Mammary epithelial cell (primary cell): ENCODE measurements at regions of chr17 and their contacts with region 1.

Region 1: DNA sequence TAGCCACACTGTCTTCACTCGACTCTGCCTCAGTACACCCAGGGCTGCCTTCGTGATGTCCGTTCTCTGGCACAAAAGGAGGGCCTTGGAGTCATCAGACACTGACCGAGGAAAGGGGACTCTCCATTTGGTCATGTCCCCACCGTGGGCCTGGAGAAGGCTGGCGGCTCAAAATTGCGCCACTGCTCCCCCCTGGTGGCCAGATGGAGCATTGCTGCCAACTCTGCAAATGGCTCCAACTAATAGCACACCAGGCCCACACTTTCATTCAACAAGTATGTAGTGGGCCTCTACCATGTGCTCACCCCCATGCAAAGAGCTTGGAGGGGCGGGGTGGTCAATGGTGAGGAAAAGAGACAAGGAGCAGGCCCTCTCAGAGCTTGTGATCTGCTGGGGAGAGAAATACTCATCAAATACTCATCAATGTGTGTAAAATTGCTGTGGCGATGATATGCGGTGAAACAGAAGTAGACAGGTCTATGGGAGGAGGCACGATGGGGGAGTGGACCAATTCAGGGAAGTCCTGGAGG is 5.2 kb upstream of the GRIN2C start:
- DNase-seq: peak; percentile 41
- H3K4me3 ChIP-seq: no peak overlapping the region
- H3K27ac ChIP-seq: no peak overlapping the region
- H3K4me1 ChIP-seq: peaks cover 5% of the 10 kb centered on the region
- H3K27me3 ChIP-seq: peaks cover 18% of the 10 kb centered on the region
- CTCF ChIP-seq: peak; percentile 96

Region 2: DNA sequence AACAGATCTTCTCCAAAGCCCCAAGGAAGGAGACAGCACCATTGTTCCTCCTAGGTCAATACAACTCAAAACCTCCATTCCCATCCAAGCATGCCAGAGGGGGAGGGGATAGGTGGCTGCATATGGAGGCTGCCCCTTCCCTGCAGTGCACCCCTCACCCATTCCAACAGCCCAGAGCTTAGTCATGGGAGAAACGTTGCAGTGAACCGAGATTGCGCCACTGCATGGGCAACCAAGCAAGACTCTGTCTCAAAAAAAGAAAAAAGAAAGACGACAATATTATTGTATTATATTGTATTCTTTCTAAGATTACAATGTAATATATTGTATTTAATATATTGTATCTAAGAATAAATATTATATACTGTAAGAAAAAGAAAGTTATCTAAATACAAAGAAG is 205.0 kb before region 1 on chr17:
- CTCF ChIA-PET with region 1: no interaction called
- dilution Hi-C with region 1: no loop called
- in situ Hi-C with region 1: no loop called
- intact Hi-C with region 1: loop called (anchors 5 kb)
- DNase-seq: no peak
- H3K4me3 ChIP-seq: no peak overlapping the region
- H3K27ac ChIP-seq: no peak overlapping the region
- H3K4me1 ChIP-seq: no peaks in the 10 kb centered on the region
- H3K27me3 ChIP-seq: no peaks in the 10 kb centered on the region
- CTCF ChIP-seq: no peak

Region 3: DNA sequence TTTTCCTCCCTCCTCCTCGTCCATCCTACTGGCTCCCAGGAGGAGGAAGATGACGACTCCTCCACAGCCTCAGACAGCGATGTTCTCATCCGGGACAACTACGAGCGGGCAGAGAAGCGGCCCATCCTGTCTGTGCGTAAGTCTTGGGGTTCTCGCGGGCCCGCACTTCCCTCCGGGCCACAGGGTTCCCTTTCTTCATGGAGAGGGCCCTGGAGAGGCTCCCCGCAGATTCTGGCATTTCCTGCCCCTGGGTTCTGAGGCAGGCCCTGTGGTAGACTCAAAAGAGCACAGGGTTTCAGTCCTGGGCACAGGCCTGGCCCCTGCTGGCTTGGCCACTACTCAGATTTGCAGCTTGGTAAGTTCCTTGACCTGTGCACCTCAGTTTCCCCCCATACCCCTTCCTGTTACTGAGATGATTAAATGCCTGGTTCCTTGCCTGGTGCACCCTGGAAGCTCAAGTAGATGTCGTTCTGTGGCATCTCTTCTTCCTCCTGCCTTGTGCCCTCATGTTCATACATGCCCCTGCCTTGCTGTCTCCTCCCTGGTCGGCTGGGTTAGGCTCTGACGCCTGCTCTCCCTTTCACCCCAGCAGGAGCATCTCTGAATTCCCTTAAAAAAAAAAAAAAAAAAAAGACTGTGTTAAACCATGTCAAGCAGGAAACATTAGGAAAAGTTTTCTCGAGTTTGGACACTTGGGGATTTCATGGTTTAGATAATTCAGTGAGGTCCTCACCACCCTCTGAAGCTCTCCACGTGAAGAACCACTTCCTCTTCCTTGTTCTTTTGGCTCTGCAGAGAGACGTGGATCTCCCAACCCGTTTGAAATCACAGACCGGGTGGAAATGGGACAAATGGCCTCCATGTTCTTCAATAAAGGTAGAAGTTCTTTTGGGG is 74.5 kb before region 1 on chr17:
- CTCF ChIA-PET with region 1: no interaction called
- dilution Hi-C with region 1: loop called (anchors 5 kb)
- in situ Hi-C with region 1: loop called (anchors 10 kb)
- intact Hi-C with region 1: loop called (anchors 1 kb)
- DNase-seq: no peak
- H3K4me3 ChIP-seq: no peak overlapping the region
- H3K27ac ChIP-seq: no peak overlapping the region
- H3K4me1 ChIP-seq: no peaks in the 10 kb centered on the region
- H3K27me3 ChIP-seq: no peaks in the 10 kb centered on the region
- CTCF ChIP-seq: no peak

Region 4: GRCh38 chr17:74798239-74798707 is 66.7 kb before region 1 on chr17:
- CTCF ChIA-PET with region 1: no interaction called
- dilution Hi-C with region 1: loop called (anchors 5 kb)
- in situ Hi-C with region 1: loop called (anchors 10 kb)
- intact Hi-C with region 1: no loop called
- DNase-seq: no peak
- H3K4me3 ChIP-seq: no peak overlapping the region
- H3K27ac ChIP-seq: no peak overlapping the region
- H3K4me1 ChIP-seq: no peaks in the 10 kb centered on the region
- H3K27me3 ChIP-seq: no peaks in the 10 kb centered on the region
- CTCF ChIP-seq: no peak

Region 5: GRCh38 chr17:74815550-74816370 is 49.2 kb before region 1 on chr17:
- CTCF ChIA-PET with region 1: no interaction called
- dilution Hi-C with region 1: no loop called
- in situ Hi-C with region 1: no loop called
- intact Hi-C with region 1: no loop called
- DNase-seq: no peak
- H3K4me3 ChIP-seq: no peak overlapping the region
- H3K27ac ChIP-seq: no peak overlapping the region
- H3K4me1 ChIP-seq: no peaks in the 10 kb centered on the region
- H3K27me3 ChIP-seq: no peaks in the 10 kb centered on the region
- CTCF ChIP-seq: no peak

Region 6: GRCh38 chr17:74842599-74843351 is 22.2 kb before region 1 on chr17:
- CTCF ChIA-PET with region 1: no interaction called
- dilution Hi-C with region 1: no loop called
- in situ Hi-C with region 1: no loop called
- intact Hi-C with region 1: loop called (anchors 2 kb)
- DNase-seq: no peak
- H3K4me3 ChIP-seq: peak overlapping the region in 2 of 3 experiments; percentile 28 to 41
- H3K27ac ChIP-seq: no peak overlapping the region
- H3K4me1 ChIP-seq: peaks cover 10% of the 10 kb centered on the region
- H3K27me3 ChIP-seq: no peaks in the 10 kb centered on the region
- CTCF ChIP-seq: peak; percentile 13 to 54

Region 7: GRCh38 chr17:74923533-74924249 is 58.8 kb after region 1 on chr17:
- CTCF ChIA-PET with region 1: no interaction called
- dilution Hi-C with region 1: no loop called
- in situ Hi-C with region 1: no loop called
- intact Hi-C with region 1: no loop called
- DNase-seq: peak; percentile 33
- H3K4me3 ChIP-seq: peak overlapping the region; percentile 35 to 57 (median 40)
- H3K27ac ChIP-seq: no peak overlapping the region
- H3K4me1 ChIP-seq: peaks cover 26% of the 10 kb centered on the region
- H3K27me3 ChIP-seq: peaks cover 22% of the 10 kb centered on the region
- CTCF ChIP-seq: peak; percentile 55 to 90

Region 8: GRCh38 chr17:74972107-74972972 is 107.4 kb after region 1 on chr17 and contains the start of gene HID1:
- CTCF ChIA-PET with region 1: no interaction called
- dilution Hi-C with region 1: no loop called
- in situ Hi-C with region 1: no loop called
- intact Hi-C with region 1: no loop called
- DNase-seq: no peak
- H3K4me3 ChIP-seq: peak within 1 kb of the TSS; percentile 42 to 62 (median 50)
- H3K27ac ChIP-seq: no peak within 1 kb of the TSS
- H3K4me1 ChIP-seq: peaks cover 12% of the 10 kb centered on the region
- H3K27me3 ChIP-seq: no peaks in the 10 kb centered on the region
- CTCF ChIP-seq: no peak
- total RNA-seq, gene HID1: 1.2 TPM

Region 9: GRCh38 chr17:75338335-75338734 is 473.4 kb after region 1 on chr17:
- CTCF ChIA-PET with region 1: no interaction called
- dilution Hi-C with region 1: no loop called
- in situ Hi-C with region 1: no loop called
- intact Hi-C with region 1: no loop called
- DNase-seq: no peak
- H3K4me3 ChIP-seq: no peak overlapping the region
- H3K27ac ChIP-seq: no peak overlapping the region
- H3K4me1 ChIP-seq: no peaks in the 10 kb centered on the region
- H3K27me3 ChIP-seq: no peaks in the 10 kb centered on the region
- CTCF ChIP-seq: no peak